Posterior vena cava (tissue), 2 donors: ENCODE measurements at regions of chr2 and their contacts with region 1.

Region 1: DNA sequence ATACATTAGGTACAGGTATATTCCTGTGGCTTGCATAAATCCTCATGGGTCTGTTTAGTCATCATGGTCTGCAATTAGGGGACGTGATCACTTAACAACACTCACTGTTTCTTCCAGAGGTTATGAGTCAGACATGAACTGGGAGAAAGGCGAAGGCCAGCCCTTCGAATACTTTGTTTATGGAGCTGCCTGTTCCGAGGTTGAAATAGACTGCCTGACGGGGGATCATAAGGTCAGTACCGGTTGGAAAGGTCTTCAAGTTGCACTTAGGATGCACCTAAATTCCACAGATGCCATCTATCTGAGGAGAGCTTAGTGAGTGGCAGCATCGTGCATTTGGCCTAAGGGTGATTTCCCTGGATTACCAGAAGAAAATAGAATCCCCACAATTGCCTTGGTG is 76.9 kb downstream of the AOX1 start:
- DNase-seq: no peak

Region 2: DNA sequence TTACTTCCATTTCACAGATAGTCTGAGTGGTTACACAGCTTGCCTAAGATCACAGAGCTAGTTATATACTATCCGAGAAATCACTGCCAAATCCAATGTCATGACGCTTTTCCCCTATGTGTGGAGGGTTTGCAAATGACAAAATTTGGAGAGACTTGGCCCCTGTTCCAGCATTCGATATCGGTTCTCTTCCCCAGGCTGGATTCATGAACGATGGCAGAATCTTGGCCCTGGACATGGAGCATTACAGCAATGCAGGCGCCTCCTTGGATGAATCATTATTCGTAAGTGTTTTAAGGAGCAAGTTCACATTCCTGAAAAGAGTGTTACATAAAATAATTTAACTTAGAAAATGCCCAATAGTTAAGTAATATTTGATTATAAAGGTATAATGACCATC is 21.8 kb before region 1 on chr2:
- intact Hi-C with region 1: loop called in 1 of 2 experiments (anchors 1 kb)
- DNase-seq: no peak

Region 3: GRCh38 chr2:200742426-200742825 is 79.7 kb after region 1 on chr2:
- intact Hi-C with region 1: no loop called
- DNase-seq: peak; percentile 94

Region 4: DNA sequence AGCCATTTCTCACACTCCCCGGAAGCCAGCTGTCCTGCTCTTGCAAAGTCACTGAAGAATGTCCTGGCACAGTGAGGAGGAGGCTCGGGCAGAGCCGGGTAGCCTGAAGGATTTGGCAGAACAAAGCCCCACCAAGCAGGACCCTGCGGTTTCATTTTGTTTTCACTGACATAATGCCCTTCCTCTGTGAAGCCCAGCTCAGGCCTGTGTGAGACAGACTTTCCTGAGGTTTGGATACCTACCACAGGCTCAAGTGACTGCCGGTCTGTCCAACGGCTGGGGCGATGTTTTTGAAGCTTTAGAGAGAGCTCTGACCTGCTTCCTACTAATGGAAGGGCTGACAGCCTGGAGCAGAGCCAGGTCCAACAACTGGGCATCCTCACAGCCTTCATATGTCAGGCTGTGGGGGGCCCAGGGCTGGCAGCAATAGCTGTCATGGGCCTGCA is 1271.1 kb after region 1 on chr2:
- intact Hi-C with region 1: no loop called
- DNase-seq: no peak